Spleen (tissue), 13 donors: ENCODE measurements at regions of chr13 and their contacts with region 1.

Region 1: GRCh38 chr13:30617315-30618185 is at the start of gene USPL1:
- DNase-seq: peak; percentile 100
- H3K4me3 ChIP-seq: peak within 1 kb of the TSS; percentile 58 to 93 (median 79)
- H3K27ac ChIP-seq: peak within 1 kb of the TSS; percentile 98 to 100 (median 100)
- H3K4me1 ChIP-seq: peaks cover 25 to 80% (median 44%) of the 10 kb centered on the region in 6 donors
- H3K27me3 ChIP-seq: no peaks in the 10 kb centered on the region
- CTCF ChIP-seq: peak; percentile 58 to 93 (median 81)
- POLR2A ChIP-seq: peak; percentile 94 to 98 (median 96)
- total RNA-seq, gene USPL1: 21.0 to 42.2 (median 27.9) TPM

Region 2: DNA sequence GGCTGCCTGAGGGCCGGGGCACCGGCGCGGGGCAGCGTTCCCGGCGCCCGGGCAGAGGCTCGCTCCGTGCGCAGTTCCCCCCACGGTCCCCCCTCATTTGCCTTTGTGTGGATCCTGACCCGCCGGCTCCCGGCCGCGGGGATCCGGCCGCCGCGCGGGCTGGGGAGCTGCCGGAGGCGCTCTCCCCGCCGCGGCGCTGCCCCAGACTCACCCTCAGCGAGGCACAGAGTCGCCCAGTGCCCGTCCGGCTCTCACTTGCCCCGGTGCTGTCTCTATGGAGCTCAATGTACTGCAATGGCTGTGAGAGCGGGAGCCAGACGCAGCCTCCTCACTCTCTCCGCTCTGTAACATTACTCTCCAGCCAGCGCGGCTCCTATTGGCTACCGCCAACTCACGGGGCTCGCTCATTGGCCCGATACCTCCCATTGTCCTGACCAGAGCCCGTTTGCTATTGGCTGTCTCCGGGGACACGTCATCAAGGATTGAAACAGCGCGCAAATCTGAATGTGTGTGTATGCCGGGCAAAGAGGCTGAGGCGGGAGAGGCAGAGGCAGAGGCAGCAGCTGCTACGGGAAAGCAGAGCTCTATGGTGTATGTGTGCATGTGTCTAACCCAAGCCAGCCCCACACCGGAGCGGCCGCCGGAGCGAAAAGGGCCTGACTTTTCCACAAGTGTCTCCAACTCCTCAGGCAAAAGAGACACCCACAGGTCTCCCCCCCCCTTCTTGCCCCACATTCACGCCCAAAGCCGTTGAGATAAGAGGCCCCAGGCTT is 151.8 kb before region 1 on chr13 and contains the start of gene HMGB1:
- intact Hi-C with region 1: loop called (anchors 10 kb)
- DNase-seq: peak; percentile 98
- H3K4me3 ChIP-seq: peak within 1 kb of the TSS; percentile 56 to 83 (median 65)
- H3K27ac ChIP-seq: peak within 1 kb of the TSS; percentile 99 to 100 (median 100)
- H3K4me1 ChIP-seq: peaks cover 28 to 44% (median 42%) of the 10 kb centered on the region in 6 donors
- H3K27me3 ChIP-seq: no peaks in the 10 kb centered on the region
- CTCF ChIP-seq: peak in 1 of 11 experiments; percentile 14
- POLR2A ChIP-seq: peak; percentile 93 to 99 (median 96)
- total RNA-seq, gene HMGB1: 221 to 400 (median 295) TPM

Region 3: GRCh38 chr13:30673669-30674521 is 56.3 kb after region 1 on chr13:
- intact Hi-C with region 1: loop called (anchors 10 kb)
- DNase-seq: peak; percentile 99
- H3K4me3 ChIP-seq: peak overlapping the region; percentile 23 to 75 (median 48)
- H3K27ac ChIP-seq: peak overlapping the region; percentile 32 to 92 (median 84)
- H3K4me1 ChIP-seq: peaks cover 0 to 32% (median 18%) of the 10 kb centered on the region in 6 donors
- H3K27me3 ChIP-seq: no peaks in the 10 kb centered on the region
- CTCF ChIP-seq: peak; percentile 52 to 88 (median 81)
- POLR2A ChIP-seq: no peak